ENCODE measurements at regions of chr12 and their contacts with region 1.

Region 1: GRCh38 chr12:10140001-10140400 is 10.0 kb upstream of the CLEC7A start:
- DNase-seq: peak; percentile 35
- H3K27ac ChIP-seq: no peak overlapping the region
- CTCF ChIP-seq: 0 out of 2 replicates have a peak, but pooled peaks have one; percentile 9

Region 2: DNA sequence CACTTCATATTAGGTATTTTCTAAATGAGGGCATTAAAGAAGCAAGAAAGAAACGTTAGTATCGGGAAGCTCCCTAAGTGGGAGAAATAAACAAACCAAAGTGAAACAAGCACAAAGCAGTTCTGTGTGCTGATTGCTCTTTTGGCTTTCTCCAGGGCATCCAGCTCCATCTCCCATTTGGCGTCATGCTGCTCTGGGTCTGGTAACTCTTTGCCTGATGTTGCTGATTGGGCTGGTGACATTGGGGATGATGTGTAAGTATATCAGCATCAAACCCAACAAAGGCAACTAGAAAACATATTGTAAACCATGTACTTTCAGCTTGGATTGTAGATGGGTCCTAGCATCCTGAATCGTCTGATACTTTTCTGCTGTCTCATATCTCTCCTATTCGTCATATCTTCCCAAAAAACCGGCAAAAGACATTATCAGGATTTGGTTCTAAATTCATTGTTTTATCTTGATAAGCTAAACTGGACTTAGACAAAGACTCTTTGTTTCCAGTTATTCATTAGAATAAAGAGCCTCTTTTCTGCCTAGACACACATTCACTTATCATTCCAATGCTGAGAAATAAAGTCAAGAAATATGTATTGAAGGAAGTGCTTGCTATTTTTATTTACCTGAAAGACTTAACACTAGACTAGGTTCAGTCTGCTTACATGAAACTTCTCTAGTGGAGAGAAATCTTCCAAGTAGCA is 127.2 kb before region 1 on chr12:
- CTCF ChIA-PET with region 1: interaction called, 11 read pairs
- POLR2A ChIA-PET with region 1: no interaction called
- DNase-seq: no peak
- H3K27ac ChIP-seq: no peak overlapping the region
- CTCF ChIP-seq: no peak

Region 3: DNA sequence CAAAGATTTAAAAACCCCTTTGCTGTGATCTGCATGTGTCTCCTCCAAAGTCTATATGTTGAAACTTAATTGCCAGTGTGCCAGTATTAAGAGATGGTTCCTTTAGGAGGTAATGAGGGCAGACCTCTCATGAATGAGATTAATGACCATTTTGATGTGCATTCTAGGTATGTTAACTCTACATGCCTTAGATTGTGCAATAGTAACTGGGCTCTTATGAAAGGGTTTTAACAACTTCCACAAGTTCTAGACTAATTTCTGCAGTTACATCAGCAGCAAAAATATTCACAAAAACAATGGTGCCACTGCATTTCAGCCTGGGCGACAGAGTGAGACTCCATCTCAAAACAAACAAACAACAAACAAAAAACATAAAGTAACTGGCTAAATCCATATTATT is 690.0 kb after region 1 on chr12:
- CTCF ChIA-PET with region 1: no interaction called
- POLR2A ChIA-PET with region 1: no interaction called
- DNase-seq: no peak
- H3K27ac ChIP-seq: no peak overlapping the region
- CTCF ChIP-seq: no peak